Aorta (tissue), 5 donors: ENCODE measurements at regions of chr1 and their contacts with region 1.

Region 1: GRCh38 chr1:236904874-236905741 is 99.1 kb downstream of the MT1HL1 start:
- DNase-seq: no peak
- ATAC-seq: no peak
- H3K4me3 ChIP-seq: no peak overlapping the region
- H3K27ac ChIP-seq: no peak overlapping the region
- H3K4me1 ChIP-seq: no peaks in the 10 kb centered on the region
- H3K27me3 ChIP-seq: no peaks in the 10 kb centered on the region

Region 2: GRCh38 chr1:236830560-236830959 is 74.5 kb before region 1 on chr1:
- intact Hi-C with region 1: no loop called
- DNase-seq: no peak
- ATAC-seq: peak; percentile 54
- H3K4me3 ChIP-seq: no peak overlapping the region
- H3K27ac ChIP-seq: no peak overlapping the region
- H3K4me1 ChIP-seq: no peaks in the 10 kb centered on the region
- H3K27me3 ChIP-seq: no peaks in the 10 kb centered on the region

Region 3: DNA sequence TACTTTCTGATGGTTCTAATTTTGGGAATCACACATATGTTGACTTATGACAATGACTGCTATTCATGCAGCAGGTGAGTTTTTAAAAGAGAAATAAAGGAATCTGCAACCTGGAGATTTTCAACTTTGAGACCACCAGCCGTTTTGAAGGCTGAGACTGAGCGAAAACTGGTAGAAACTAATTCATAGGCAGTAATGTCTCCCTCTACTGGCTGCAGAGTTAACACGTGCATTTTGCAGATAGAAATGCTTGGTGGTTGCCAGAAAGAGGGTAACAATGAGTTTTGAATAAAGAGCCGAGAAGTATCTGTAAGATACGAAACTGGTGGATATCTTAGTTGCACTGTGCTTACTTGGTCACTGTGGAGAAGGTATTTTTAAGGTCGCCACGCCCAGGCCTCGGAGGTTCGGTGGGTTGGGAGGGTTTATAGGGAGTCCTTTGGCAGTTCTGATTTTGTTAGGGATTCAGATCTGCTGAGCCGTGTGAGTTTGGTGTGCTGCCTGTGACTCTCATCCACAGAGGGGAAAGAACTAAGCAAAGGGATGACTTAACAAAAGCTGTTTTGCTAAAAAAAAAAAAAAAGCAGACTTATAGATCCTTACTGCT is 219.9 kb after region 1 on chr1:
- intact Hi-C with region 1: loop called in 1 of 2 experiments (anchors 10 kb)
- DNase-seq: no peak
- ATAC-seq: no peak
- H3K4me3 ChIP-seq: no peak overlapping the region
- H3K27ac ChIP-seq: no peak overlapping the region
- H3K4me1 ChIP-seq: no peaks in the 10 kb centered on the region
- H3K27me3 ChIP-seq: no peaks in the 10 kb centered on the region